Breast epithelium (tissue), 4 donors: ENCODE measurements at regions of chr7 and their contacts with region 1.

Region 1: GRCh38 chr7:158745057-158745715 is 40.6 kb upstream of the NCAPG2 start:
- DNase-seq: no peak
- H3K4me3 ChIP-seq: no peak overlapping the region
- H3K27ac ChIP-seq: no peak overlapping the region
- H3K4me1 ChIP-seq: no peaks in the 10 kb centered on the region
- H3K27me3 ChIP-seq: no peaks in the 10 kb centered on the region
- CTCF ChIP-seq: no peak
- POLR2A ChIP-seq: no peak

Region 2: GRCh38 chr7:157795644-157796043 is 949.5 kb before region 1 on chr7:
- intact Hi-C with region 1: no loop called
- DNase-seq: no peak
- H3K4me3 ChIP-seq: no peak overlapping the region
- H3K27ac ChIP-seq: no peak overlapping the region
- H3K4me1 ChIP-seq: no peaks in the 10 kb centered on the region
- H3K27me3 ChIP-seq: peaks cover 0 to 11% of the 10 kb centered on the region in 2 donors
- CTCF ChIP-seq: no peak
- POLR2A ChIP-seq: no peak

Region 3: DNA sequence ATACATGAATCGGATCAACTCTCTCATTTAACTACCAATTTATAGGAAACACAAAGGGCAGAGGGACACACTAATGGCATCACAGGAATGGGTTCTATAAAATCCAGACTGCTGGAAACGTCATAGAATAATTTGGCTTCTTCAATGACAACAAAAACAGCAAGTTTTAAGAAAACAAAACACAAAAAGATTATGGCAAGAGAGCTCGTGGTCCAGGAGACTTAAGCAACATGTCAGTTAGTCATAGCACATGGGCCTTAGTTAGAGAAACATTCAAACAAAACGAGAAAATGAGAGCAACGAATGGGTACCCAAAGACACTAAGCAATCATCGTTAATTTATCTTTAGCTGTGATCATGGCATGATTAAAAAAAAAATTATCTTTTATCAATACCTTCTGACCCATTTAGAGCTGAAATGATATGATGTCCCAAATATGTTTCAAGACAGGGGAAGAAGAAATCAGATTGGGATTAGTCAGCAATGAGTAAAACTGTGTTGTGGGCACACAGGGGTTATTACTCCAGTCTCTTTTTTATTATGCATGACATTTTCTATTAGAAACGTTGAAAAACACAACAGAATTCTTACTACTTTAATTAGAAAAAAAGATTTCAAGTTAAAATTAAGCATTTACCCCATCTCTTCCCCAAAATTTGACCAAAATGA is 68.9 kb before region 1 on chr7:
- intact Hi-C with region 1: loop called (anchors 2 kb)
- DNase-seq: no peak
- H3K4me3 ChIP-seq: no peak overlapping the region
- H3K27ac ChIP-seq: no peak overlapping the region
- H3K4me1 ChIP-seq: no peaks in the 10 kb centered on the region
- H3K27me3 ChIP-seq: no peaks in the 10 kb centered on the region
- CTCF ChIP-seq: no peak
- POLR2A ChIP-seq: no peak

Region 4: GRCh38 chr7:158782761-158783401 is 37.7 kb after region 1 on chr7:
- intact Hi-C with region 1: no loop called
- DNase-seq: no peak
- H3K4me3 ChIP-seq: no peak overlapping the region
- H3K27ac ChIP-seq: peak overlapping the region; percentile 52 to 64
- H3K4me1 ChIP-seq: no peaks in the 10 kb centered on the region
- H3K27me3 ChIP-seq: no peaks in the 10 kb centered on the region
- CTCF ChIP-seq: peak in 2 of 3 donors; percentile 22 to 30
- POLR2A ChIP-seq: no peak

Region 5: DNA sequence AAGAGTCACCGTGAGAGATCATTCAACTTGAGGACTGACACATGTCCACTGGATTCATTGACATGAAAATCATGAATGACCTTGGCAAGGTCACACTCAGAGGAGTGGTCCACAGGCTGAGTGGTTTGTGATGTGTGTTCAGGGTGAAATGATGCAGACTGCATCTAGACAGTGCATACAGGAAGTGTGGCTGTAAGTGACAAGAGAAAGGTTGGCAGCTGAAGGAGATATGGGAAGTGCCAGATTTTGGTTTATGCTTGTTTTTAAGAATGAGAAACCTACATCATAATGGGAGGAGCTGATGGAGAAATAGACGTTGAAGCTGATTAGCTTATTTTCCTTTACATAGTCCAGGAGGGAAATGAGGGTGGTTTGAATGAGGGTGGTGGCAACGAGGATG is 464.2 kb after region 1 on chr7:
- intact Hi-C with region 1: no loop called
- DNase-seq: no peak
- H3K4me3 ChIP-seq: no peak overlapping the region
- H3K27ac ChIP-seq: no peak overlapping the region
- H3K4me1 ChIP-seq: no peaks in the 10 kb centered on the region
- H3K27me3 ChIP-seq: no peaks in the 10 kb centered on the region
- CTCF ChIP-seq: no peak
- POLR2A ChIP-seq: no peak